ENCODE measurements at regions of chr11 and their contacts with region 1.

Region 1: GRCh38 chr11:73335204-73335923 is 27.3 kb downstream of the ARHGEF17 start:
- DNase-seq: peak; percentile 78
- H3K4me3 Mint-ChIP-seq: no peak overlapping the region
- H3K27ac Mint-ChIP-seq: no peak overlapping the region
- H3K4me1 Mint-ChIP-seq: no peaks in the 10 kb centered on the region
- H3K27me3 Mint-ChIP-seq: no peaks in the 10 kb centered on the region

Region 2: GRCh38 chr11:73307323-73308002 is 27.9 kb before region 1 on chr11:
- CTCF ChIA-PET with region 1: interaction called, 13 read pairs
- POLR2A ChIA-PET with region 1: no interaction called
- DNase-seq: peak; percentile 90
- H3K4me3 Mint-ChIP-seq: peak overlapping the region; percentile 81
- H3K27ac Mint-ChIP-seq: no peak overlapping the region
- H3K4me1 Mint-ChIP-seq: peaks cover 6% of the 10 kb centered on the region
- H3K27me3 Mint-ChIP-seq: peaks cover 41% of the 10 kb centered on the region

Region 3: DNA sequence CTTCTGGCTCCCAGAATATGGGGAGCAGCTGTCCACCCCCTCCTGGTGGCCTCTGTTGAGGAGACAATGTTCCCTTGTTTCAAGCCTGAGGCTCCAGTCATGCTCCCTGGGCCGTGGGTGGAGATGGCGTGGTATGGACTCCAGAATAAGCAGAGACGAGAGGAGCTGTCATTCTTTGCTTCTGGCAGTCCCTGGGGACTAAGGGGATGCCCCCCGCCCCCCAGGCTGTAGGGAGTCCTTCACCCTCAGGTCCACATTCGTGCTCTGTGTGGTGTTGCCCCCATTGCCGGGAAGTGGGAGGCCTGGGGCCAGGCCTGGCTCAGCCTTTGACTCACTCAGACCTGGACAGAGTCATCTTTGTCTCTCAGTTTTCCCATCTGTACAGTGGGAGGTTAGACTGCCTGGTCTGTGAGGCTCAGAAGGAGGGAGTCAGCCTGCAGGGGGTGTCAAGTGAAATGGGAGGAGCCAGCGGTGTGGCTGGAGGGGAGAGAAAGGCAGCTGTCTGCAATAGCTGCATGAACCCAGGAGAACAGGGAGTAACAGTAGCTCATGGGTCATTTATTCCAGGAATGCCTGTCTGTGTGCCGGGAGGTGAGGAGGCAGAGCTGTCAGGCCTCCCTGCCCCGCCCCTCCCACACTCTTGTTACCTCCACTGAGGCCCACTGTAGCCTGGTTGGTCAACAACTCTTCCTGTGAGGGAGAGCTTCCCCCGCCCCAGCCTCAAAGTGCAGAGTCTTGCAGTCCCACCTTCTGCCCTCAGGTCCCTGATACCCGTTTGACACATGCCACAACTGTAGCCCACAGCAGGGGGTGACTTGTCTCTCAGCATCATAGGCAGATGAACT is 21.0 kb before region 1 on chr11:
- CTCF ChIA-PET with region 1: interaction called, 13 read pairs
- POLR2A ChIA-PET with region 1: no interaction called
- DNase-seq: no peak
- H3K4me3 Mint-ChIP-seq: no peak overlapping the region
- H3K27ac Mint-ChIP-seq: peak overlapping the region; percentile 25
- H3K4me1 Mint-ChIP-seq: peaks cover 15% of the 10 kb centered on the region
- H3K27me3 Mint-ChIP-seq: peaks cover 18% of the 10 kb centered on the region

Region 4: DNA sequence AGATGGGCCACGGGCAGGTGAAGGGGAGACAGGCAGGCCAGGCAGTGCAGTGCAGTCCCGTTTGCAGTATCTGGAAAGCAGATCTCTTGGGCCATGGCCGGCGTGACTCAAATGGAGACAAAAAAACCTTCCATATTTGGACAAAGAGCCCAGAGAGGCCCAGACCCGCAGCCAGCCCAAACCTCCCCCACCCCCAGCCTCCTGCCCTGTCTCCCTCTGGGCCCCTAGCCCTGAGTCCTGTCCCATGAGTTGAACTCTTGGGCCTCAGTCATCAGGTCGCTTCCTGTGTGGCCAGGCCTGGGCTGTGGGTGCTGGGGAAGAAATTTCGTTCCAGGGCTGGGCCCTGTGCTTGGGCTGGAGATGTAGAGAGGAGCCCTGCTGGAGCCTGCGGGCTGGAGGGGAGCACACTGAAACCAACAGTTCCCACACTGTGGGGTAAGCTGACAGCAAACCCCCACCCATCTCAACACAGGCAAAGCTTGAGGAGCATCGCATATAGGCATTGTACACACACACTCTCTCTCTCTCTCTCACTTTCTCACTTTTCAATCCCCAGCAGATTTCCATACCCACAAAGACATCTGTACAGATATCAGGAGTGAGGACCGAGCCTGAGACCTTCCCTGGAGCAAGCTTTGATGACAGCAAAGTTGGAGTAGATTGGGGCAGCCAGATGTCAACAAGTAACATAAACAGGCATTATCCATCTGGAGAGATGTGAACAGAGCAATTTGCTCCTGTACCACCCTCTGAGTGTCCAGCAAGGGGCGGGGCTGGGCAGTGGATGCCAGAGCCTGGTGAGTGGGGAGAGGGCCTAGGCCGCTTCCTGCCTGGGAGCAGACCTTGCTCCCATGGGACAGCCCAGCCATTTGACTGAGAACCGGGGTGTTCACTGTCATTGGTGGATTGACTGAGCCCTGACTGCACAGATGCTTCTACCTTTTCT is 10.1 kb before region 1 on chr11:
- CTCF ChIA-PET with region 1: interaction called, 26 read pairs
- POLR2A ChIA-PET with region 1: no interaction called
- DNase-seq: no peak
- H3K4me3 Mint-ChIP-seq: no peak overlapping the region
- H3K27ac Mint-ChIP-seq: no peak overlapping the region
- H3K4me1 Mint-ChIP-seq: peaks cover 4% of the 10 kb centered on the region
- H3K27me3 Mint-ChIP-seq: no peaks in the 10 kb centered on the region